Tibial artery (tissue), 4 donors: ENCODE measurements at regions of chr13 and their contacts with region 1.

Region 1: DNA sequence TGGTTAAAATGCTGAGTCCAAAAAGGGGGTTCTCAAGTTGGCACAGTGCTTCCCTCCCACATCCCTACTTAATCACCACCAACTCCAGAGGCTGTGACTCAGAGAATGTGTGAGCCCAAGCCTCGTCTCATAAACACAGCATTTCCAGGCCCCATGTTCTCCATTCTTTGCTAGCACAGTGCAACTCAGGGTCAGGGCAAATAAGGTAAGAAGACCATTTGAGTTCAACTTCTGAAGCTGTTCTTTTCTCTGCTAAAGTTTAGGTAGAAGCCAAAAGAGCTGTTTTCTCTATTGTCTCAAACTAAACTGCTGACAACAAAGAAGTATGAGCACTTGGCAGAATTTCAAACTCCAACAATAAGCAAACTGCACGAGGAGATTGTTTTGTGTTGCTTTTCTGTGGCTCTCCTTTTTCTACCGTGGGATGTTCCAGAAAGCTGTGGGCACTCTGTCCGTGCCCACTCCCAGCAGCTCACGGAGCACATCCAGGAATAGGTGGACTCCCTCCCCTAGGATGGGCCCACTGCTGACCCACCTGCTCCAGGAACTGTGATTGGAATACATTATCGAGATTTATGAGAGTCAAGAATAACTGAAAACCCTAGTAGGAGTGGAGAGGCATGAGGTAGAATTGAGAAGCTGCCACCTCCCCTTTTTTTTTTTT is 494.3 kb downstream of the COG6 start:
- DNase-seq: peak; percentile 74 to 76
- H3K4me3 ChIP-seq: no peak overlapping the region
- H3K27ac ChIP-seq: peak overlapping the region; percentile 62 to 69
- H3K4me1 ChIP-seq: peaks cover 4 to 32% (median 8%) of the 10 kb centered on the region in 4 donors
- H3K27me3 ChIP-seq: no peaks in the 10 kb centered on the region
- CTCF ChIP-seq: no peak

Region 2: GRCh38 chr13:40190641-40191100 is 40.9 kb after region 1 on chr13:
- intact Hi-C with region 1: loop called (anchors 5 kb)
- DNase-seq: peak; percentile 58 to 79
- H3K4me3 ChIP-seq: no peak overlapping the region
- H3K27ac ChIP-seq: peak overlapping the region; percentile 83 to 88
- H3K4me1 ChIP-seq: peaks cover 0 to 56% (median 44%) of the 10 kb centered on the region in 4 donors
- H3K27me3 ChIP-seq: no peaks in the 10 kb centered on the region
- CTCF ChIP-seq: no peak